ENCODE measurements at regions of chr1 and their contacts with region 1.

Region 1: GRCh38 chr1:37989361-37989930 is 376 bp downstream of the SF3A3 start:
- DNase-seq: peak in 2 of 3 donors; percentile 41 to 65
- H3K4me3 ChIP-seq: peak overlapping the region; percentile 58 to 99 (median 97)
- H3K27ac ChIP-seq: peak overlapping the region; percentile 74 to 87
- H3K4me1 ChIP-seq: peaks cover 5 to 15% (median 10%) of the 10 kb centered on the region in 4 experiments
- H3K27me3 ChIP-seq: no peaks in the 10 kb centered on the region

Region 2: GRCh38 chr1:37999430-38000232 is 10.2 kb after region 1 on chr1:
- CTCF ChIA-PET with region 1: interaction called, 19 read pairs
- POLR2A ChIA-PET with region 1: interaction called, 6 read pairs
- DNase-seq: peak; percentile 80 to 90 (median 85)
- H3K4me3 ChIP-seq: peak overlapping the region in 5 of 7 experiments; percentile 22 to 56 (median 36)
- H3K27ac ChIP-seq: peak overlapping the region; percentile 90 to 95
- H3K4me1 ChIP-seq: peaks cover 13 to 97% (median 94%) of the 10 kb centered on the region in 4 experiments
- H3K27me3 ChIP-seq: no peaks in the 10 kb centered on the region